Activated CD4-positive, alpha-beta memory T cell treated with anti-CD3 and anti-CD28 coated beads, Interleukin-2, amount 10 ng/mL, durations not matched to agents 7 days and 5 days (primary cell): ENCODE measurements at regions of chr4 and their contacts with region 1.

Region 1: GRCh38 chr4:38319456-38320342 is 344.3 kb upstream of the KLF3 start:
- DNase-seq: peak; percentile 92
- H3K4me3 Mint-ChIP-seq: peak overlapping the region; percentile 76
- H3K27ac Mint-ChIP-seq: peak overlapping the region; percentile 92
- H3K4me1 Mint-ChIP-seq: peaks cover 34% of the 10 kb centered on the region
- H3K27me3 Mint-ChIP-seq: peaks cover 18% of the 10 kb centered on the region

Region 2: DNA sequence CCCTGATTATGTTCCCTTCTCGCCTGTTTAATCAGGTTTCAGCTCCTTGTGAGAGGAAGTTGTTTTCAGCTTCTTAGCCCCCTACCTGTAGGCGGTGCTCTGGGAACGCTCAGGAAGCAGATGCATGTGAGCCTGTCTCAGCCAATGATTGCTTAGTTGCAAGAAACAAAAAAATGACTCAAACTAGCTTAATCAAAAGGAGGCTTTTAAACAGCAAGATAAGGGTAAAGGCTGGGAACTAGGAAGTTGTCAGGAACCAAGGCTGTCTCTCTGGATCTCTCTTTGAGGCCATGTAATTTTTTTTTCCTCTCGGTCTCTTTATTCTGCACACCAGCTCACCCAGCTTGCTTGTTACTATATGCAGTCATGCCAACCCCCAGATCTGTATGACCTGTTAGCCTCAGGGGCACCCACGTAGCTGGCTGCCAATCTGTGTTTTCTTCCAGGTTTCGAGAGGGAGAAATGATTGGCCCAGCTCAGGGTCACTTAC is 250.4 kb before region 1 on chr4:
- CTCF ChIA-PET with region 1: interaction called, 13 read pairs
- POLR2A ChIA-PET with region 1: interaction called, 5 read pairs
- DNase-seq: peak; percentile 31
- H3K4me3 Mint-ChIP-seq: no peak overlapping the region
- H3K27ac Mint-ChIP-seq: no peak overlapping the region
- H3K4me1 Mint-ChIP-seq: peaks cover 22% of the 10 kb centered on the region
- H3K27me3 Mint-ChIP-seq: no peaks in the 10 kb centered on the region

Region 3: GRCh38 chr4:38268837-38269236 is 50.9 kb before region 1 on chr4:
- CTCF ChIA-PET with region 1: no interaction called
- POLR2A ChIA-PET with region 1: no interaction called
- DNase-seq: no peak
- H3K4me3 Mint-ChIP-seq: no peak overlapping the region
- H3K27ac Mint-ChIP-seq: no peak overlapping the region
- H3K4me1 Mint-ChIP-seq: no peaks in the 10 kb centered on the region
- H3K27me3 Mint-ChIP-seq: peaks cover 1% of the 10 kb centered on the region

Region 4: GRCh38 chr4:38334810-38335537 is 15.3 kb after region 1 on chr4:
- CTCF ChIA-PET with region 1: interaction called, 14 read pairs
- POLR2A ChIA-PET with region 1: no interaction called
- DNase-seq: no peak
- H3K4me3 Mint-ChIP-seq: no peak overlapping the region
- H3K27ac Mint-ChIP-seq: no peak overlapping the region
- H3K4me1 Mint-ChIP-seq: peaks cover 16% of the 10 kb centered on the region
- H3K27me3 Mint-ChIP-seq: peaks cover 51% of the 10 kb centered on the region

Region 5: GRCh38 chr4:38663801-38664705 is 344.4 kb after region 1 on chr4 and contains the start of gene KLF3:
- CTCF ChIA-PET with region 1: interaction called, 19 read pairs
- POLR2A ChIA-PET with region 1: interaction called, 19 read pairs
- DNase-seq: peak; percentile 90
- H3K4me3 Mint-ChIP-seq: peak within 1 kb of the TSS; percentile 85
- H3K27ac Mint-ChIP-seq: peak within 1 kb of the TSS; percentile 64
- H3K4me1 Mint-ChIP-seq: peaks cover 48% of the 10 kb centered on the region
- H3K27me3 Mint-ChIP-seq: peaks cover 42% of the 10 kb centered on the region
- total RNA-seq, gene KLF3: 21.9 to 22.1 TPM

Region 6: DNA sequence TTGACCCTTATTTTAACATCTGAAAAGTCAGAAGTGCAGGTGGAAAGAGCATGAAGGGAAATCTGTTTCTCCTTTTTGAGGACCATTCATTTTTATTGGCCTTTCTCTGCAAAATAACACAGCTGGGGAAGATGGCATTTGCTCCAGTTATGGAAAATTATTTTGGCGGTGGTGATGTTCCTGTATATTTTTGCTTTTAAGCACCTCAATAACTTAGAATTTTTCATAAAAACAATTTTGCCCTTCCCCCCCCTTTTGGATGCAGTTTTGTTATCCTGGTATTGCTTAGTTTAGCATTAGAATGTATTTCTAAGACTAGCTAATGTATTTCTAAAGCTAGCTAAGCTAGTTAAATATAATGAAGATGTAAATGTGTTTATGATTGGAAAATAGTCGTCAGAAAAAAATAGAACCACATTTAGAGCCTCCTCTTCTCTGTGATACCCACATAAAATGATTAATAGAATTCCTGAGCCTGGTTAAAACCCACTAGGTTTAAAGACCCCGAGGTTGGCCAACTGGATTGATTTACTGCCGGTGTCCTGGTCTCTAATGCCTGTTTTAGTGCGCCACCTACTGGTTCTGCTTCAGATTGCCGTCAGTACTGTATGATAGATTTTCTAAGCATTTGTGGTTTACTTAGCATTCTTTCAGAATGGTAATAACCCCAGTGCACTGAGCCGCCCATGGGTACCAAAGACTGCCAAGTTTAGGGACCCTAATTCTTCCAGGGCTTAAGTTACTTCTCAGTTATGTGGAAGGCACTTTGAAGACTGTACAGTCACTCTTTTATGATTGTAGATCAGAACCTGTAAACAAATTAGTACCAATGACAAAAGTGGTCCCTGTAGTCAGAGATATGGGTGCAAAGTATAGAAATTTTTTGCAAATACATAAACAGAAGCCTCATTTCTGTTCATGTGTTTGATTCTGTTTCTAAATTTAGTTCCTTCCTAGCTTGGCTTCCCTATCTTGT is 355.7 kb after region 1 on chr4:
- CTCF ChIA-PET with region 1: interaction called, 77 read pairs
- POLR2A ChIA-PET with region 1: interaction called, 4 read pairs
- DNase-seq: peak; percentile 83
- H3K4me3 Mint-ChIP-seq: no peak overlapping the region
- H3K27ac Mint-ChIP-seq: no peak overlapping the region
- H3K4me1 Mint-ChIP-seq: peaks cover 59% of the 10 kb centered on the region
- H3K27me3 Mint-ChIP-seq: no peaks in the 10 kb centered on the region